ENCODE measurements at regions of chr11 and their contacts with region 1.

Region 1: GRCh38 chr11:73661035-73661628 is 14.8 kb downstream of the PLEKHB1 start:
- DNase-seq: peak; percentile 82 to 100
- H3K4me3 ChIP-seq: peak overlapping the region; percentile 3 to 54 (median 46); a peak in 7 of 8 replicates
- H3K27ac ChIP-seq: peak overlapping the region; percentile 26; the same call in 1 of the 2 replicates
- H3K4me1 ChIP-seq: peaks cover 0 to 7% (median 3%) of the 10 kb centered on the region in 4 experiments; a peak in 5 of 7 replicates
- H3K27me3 ChIP-seq: peaks cover 0 to 19% (median 14%) of the 10 kb centered on the region in 4 experiments; a peak in 4 of 7 replicates
- CTCF ChIP-seq: peak; percentile 98 to 99 (median 98)
- EP300 ChIP-seq: peak; percentile 14 to 56; a peak in 2 of 3 replicates
- POLR2A ChIP-seq: peak in 1 of 2 experiments; percentile 63; a peak in 2 of 3 replicates
- RAD21 ChIP-seq: peak; percentile 100

Region 2: GRCh38 chr11:73384872-73385689 is 276.1 kb before region 1 on chr11:
- CTCF ChIA-PET with region 1: interaction called, 12 read pairs
- POLR2A ChIA-PET with region 1: no interaction called
- DNase-seq: no peak
- H3K4me3 ChIP-seq: no peak overlapping the region
- H3K27ac ChIP-seq: no peak overlapping the region
- H3K4me1 ChIP-seq: peaks cover 0 to 11% (median 0%) of the 10 kb centered on the region in 4 experiments; a peak in 1 of 7 replicates
- H3K27me3 ChIP-seq: 0 out of 7 replicates have a peak, but pooled peaks cover 0 to 2% (median 0%) of the 10 kb centered on the region in 4 experiments
- CTCF ChIP-seq: no peak
- EP300 ChIP-seq: no peak
- POLR2A ChIP-seq: no peak
- RAD21 ChIP-seq: no peak

Region 3: GRCh38 chr11:73404048-73404447 is 257.1 kb before region 1 on chr11:
- CTCF ChIA-PET with region 1: interaction called, 83 read pairs
- POLR2A ChIA-PET with region 1: interaction called, 4 read pairs
- DNase-seq: peak in 1 of 2 experiments; percentile 68
- H3K4me3 ChIP-seq: no peak overlapping the region
- H3K27ac ChIP-seq: no peak overlapping the region
- H3K4me1 ChIP-seq: peaks cover 0 to 3% (median 1%) of the 10 kb centered on the region in 4 experiments; a peak in 5 of 7 replicates
- H3K27me3 ChIP-seq: no peaks in the 10 kb centered on the region
- CTCF ChIP-seq: peak; percentile 76 to 84 (median 77)
- EP300 ChIP-seq: no peak
- POLR2A ChIP-seq: no peak
- RAD21 ChIP-seq: peak; percentile 89 to 90

Region 4: DNA sequence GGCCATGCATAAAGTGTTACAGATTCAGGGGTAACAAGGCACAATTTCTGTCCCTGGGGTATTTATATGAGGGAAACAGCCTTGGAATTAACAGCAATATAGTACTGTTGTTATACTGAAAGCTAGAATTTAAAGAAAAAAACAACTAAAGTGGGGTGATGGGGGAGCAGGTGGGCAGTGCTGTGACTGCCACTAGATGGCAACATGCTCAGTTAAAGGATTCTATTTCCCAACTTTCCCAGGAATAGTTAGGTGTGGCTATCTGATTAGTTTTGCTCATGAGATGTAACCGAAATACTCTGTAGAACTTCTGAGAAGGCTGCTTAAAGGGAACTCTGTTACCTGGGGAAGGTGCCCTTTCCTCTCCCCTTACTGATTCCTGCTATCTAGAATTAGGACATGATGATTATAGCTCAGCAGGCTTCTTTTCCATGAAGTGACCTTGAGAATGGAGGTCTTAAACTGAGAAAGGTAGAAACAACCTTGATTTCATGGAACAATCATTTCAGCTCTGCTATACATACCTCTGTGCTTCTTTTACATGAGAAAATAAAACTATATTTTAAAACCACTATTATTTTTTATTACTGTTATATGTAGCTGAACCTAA is 182.3 kb before region 1 on chr11:
- CTCF ChIA-PET with region 1: interaction called, 43 read pairs
- POLR2A ChIA-PET with region 1: interaction called, 5 read pairs
- DNase-seq: no peak
- H3K4me3 ChIP-seq: no peak overlapping the region
- H3K27ac ChIP-seq: no peak overlapping the region
- H3K4me1 ChIP-seq: peaks cover 0 to 3% (median 1%) of the 10 kb centered on the region in 4 experiments; a peak in 2 of 7 replicates
- H3K27me3 ChIP-seq: no peaks in the 10 kb centered on the region
- CTCF ChIP-seq: peak; percentile 74 to 93 (median 76)
- EP300 ChIP-seq: no peak
- POLR2A ChIP-seq: no peak
- RAD21 ChIP-seq: peak; percentile 65 to 75

Region 5: GRCh38 chr11:73647459-73648100 is 13.6 kb before region 1 on chr11:
- CTCF ChIA-PET with region 1: interaction called, 653 read pairs
- POLR2A ChIA-PET with region 1: interaction called, 16 read pairs
- DNase-seq: peak; percentile 70 to 96
- H3K4me3 ChIP-seq: peak overlapping the region; percentile 41 to 73 (median 58)
- H3K27ac ChIP-seq: no peak overlapping the region
- H3K4me1 ChIP-seq: peaks cover 9 to 25% (median 18%) of the 10 kb centered on the region in 4 experiments
- H3K27me3 ChIP-seq: peaks cover 0 to 4% (median 0%) of the 10 kb centered on the region in 4 experiments; a peak in 3 of 7 replicates
- CTCF ChIP-seq: no peak
- EP300 ChIP-seq: 0 out of 3 replicates have a peak, but pooled peaks of 1 of the 2 experiments have one; percentile 51
- POLR2A ChIP-seq: no peak
- RAD21 ChIP-seq: no peak; a peak in 1 of 4 replicates

Measured in H1 (cell line).